MCF 10A (cell line): ENCODE measurements at regions of chr11 and their contacts with region 1.

Region 1: GRCh38 chr11:6362873-6363678 is 27.2 kb upstream of the SMPD1 start:
- DNase-seq: peak; percentile 81
- H3K4me3 Mint-ChIP-seq: no peak overlapping the region
- H3K27ac Mint-ChIP-seq: no peak overlapping the region
- H3K4me1 Mint-ChIP-seq: no peaks in the 10 kb centered on the region
- H3K27me3 Mint-ChIP-seq: no peaks in the 10 kb centered on the region
- CTCF ChIP-seq: peak; percentile 82

Region 2: GRCh38 chr11:6022956-6023355 is 340.1 kb before region 1 on chr11:
- CTCF ChIA-PET with region 1: interaction called, 135 read pairs
- POLR2A ChIA-PET with region 1: interaction called, 4 read pairs
- intact Hi-C with region 1: loop called (anchors 1 kb)
- DNase-seq: peak; percentile 61
- H3K4me3 Mint-ChIP-seq: no peak overlapping the region
- H3K27ac Mint-ChIP-seq: no peak overlapping the region
- H3K4me1 Mint-ChIP-seq: no peaks in the 10 kb centered on the region
- H3K27me3 Mint-ChIP-seq: peaks cover 33% of the 10 kb centered on the region
- CTCF ChIP-seq: peak; percentile 56

Region 3: GRCh38 chr11:6251120-6251733 is 111.8 kb before region 1 on chr11:
- CTCF ChIA-PET with region 1: interaction called, 72 read pairs
- POLR2A ChIA-PET with region 1: no interaction called
- intact Hi-C with region 1: loop called (anchors 2 kb)
- DNase-seq: peak; percentile 74
- H3K4me3 Mint-ChIP-seq: no peak overlapping the region
- H3K27ac Mint-ChIP-seq: no peak overlapping the region
- H3K4me1 Mint-ChIP-seq: peaks cover 16% of the 10 kb centered on the region
- H3K27me3 Mint-ChIP-seq: no peaks in the 10 kb centered on the region
- CTCF ChIP-seq: peak; percentile 87

Region 4: GRCh38 chr11:6298605-6299004 is 64.5 kb before region 1 on chr11:
- CTCF ChIA-PET with region 1: interaction called, 24 read pairs
- POLR2A ChIA-PET with region 1: no interaction called
- intact Hi-C with region 1: loop called (anchors 1 kb)
- DNase-seq: peak; percentile 55
- H3K4me3 Mint-ChIP-seq: no peak overlapping the region
- H3K27ac Mint-ChIP-seq: no peak overlapping the region
- H3K4me1 Mint-ChIP-seq: no peaks in the 10 kb centered on the region
- H3K27me3 Mint-ChIP-seq: no peaks in the 10 kb centered on the region
- CTCF ChIP-seq: peak; percentile 54

Region 5: DNA sequence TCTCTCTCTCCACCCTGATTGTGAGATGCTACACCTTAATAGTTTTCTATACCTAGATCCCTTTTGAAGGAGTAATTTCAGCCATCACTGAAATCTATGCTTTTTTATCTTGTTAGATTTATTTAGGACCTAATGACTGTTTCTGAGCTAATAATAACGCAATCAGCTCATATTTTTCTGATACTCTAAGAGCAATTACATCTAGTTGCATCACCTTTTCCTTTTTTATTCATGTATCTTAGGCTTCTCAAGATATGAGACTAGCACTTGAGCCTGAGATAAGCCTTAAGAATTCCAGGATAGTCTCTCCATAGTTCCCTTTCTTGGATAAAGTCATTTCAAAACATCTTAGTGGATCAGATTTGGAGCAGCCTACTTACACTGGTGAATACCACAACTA is 17.7 kb before region 1 on chr11:
- CTCF ChIA-PET with region 1: interaction called, 124 read pairs
- POLR2A ChIA-PET with region 1: no interaction called
- intact Hi-C with region 1: no loop called
- DNase-seq: no peak
- H3K4me3 Mint-ChIP-seq: no peak overlapping the region
- H3K27ac Mint-ChIP-seq: no peak overlapping the region
- H3K4me1 Mint-ChIP-seq: peaks cover 7% of the 10 kb centered on the region
- H3K27me3 Mint-ChIP-seq: no peaks in the 10 kb centered on the region
- CTCF ChIP-seq: no peak